ENCODE measurements at regions of chr7 and their contacts with region 1.

Region 1: DNA sequence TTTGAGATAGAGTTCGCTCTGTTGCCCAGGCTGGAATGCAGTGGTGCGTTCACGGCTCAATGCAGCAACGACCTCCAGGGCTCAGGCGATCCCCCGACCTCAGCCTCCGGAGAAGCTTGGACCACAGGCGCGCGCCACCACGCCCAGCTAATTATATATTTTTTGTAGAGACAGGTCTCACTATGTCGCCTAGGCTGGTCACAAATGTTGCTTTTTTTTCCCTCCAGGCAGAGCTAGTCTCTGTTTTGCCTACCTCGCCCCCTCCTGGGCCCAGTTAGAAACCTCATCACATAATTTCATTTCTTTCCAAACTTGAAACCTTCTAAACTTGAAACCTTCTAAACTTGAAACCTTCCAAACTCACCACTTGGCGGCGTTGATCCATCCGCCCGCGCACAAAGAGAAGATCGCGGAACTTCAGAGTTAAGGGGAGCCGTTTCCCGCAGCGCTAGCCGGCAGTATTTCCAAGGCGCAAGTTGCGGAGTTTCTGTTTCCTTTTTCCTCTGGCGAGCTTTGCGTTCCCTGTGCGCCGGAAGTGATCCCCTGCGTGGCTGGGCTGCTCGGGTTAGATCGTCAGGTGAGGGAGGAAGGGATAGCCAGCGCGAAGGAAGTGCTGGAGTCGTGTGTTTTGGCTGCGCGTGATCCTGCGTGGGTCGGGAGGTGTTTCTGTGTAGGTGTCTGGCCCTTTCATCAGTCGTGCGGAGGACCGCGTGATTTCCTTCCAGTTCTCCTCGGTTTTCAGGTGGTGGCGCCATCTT is at the start of gene SSBP1:
- DNase-seq: peak; percentile 97
- H3K4me3 Mint-ChIP-seq: peak within 1 kb of the TSS; percentile 97
- H3K27ac Mint-ChIP-seq: peak within 1 kb of the TSS; percentile 98
- H3K4me1 Mint-ChIP-seq: peaks cover 16% of the 10 kb centered on the region
- H3K27me3 Mint-ChIP-seq: no peaks in the 10 kb centered on the region
- CTCF ChIP-seq: peak; percentile 53
- total RNA-seq, gene SSBP1: 269 and 340 TPM in 2 replicates

Region 2: GRCh38 chr7:141551094-141551781 is 186.8 kb before region 1 on chr7 and contains the start of gene AGK:
- CTCF ChIA-PET with region 1: interaction called, 3 read pairs
- POLR2A ChIA-PET with region 1: interaction called, 6 read pairs
- intact Hi-C with region 1: loop called (anchors 5 kb)
- DNase-seq: peak; percentile 64
- H3K4me3 Mint-ChIP-seq: peak within 1 kb of the TSS; percentile 85
- H3K27ac Mint-ChIP-seq: peak within 1 kb of the TSS; percentile 72
- H3K4me1 Mint-ChIP-seq: peaks cover 19% of the 10 kb centered on the region
- H3K27me3 Mint-ChIP-seq: no peaks in the 10 kb centered on the region
- CTCF ChIP-seq: no peak
- total RNA-seq, gene AGK: 35.4 and 41.4 TPM in 2 replicates

Region 3: GRCh38 chr7:141701489-141702046 is 36.4 kb before region 1 on chr7:
- CTCF ChIA-PET with region 1: interaction called, 37 read pairs
- POLR2A ChIA-PET with region 1: interaction called, 23 read pairs
- intact Hi-C with region 1: loop called (anchors 5 kb)
- DNase-seq: peak; percentile 38
- H3K4me3 Mint-ChIP-seq: peak overlapping the region; percentile 72
- H3K27ac Mint-ChIP-seq: no peak overlapping the region
- H3K4me1 Mint-ChIP-seq: peaks cover 32% of the 10 kb centered on the region
- H3K27me3 Mint-ChIP-seq: no peaks in the 10 kb centered on the region
- CTCF ChIP-seq: no peak

Region 4: DNA sequence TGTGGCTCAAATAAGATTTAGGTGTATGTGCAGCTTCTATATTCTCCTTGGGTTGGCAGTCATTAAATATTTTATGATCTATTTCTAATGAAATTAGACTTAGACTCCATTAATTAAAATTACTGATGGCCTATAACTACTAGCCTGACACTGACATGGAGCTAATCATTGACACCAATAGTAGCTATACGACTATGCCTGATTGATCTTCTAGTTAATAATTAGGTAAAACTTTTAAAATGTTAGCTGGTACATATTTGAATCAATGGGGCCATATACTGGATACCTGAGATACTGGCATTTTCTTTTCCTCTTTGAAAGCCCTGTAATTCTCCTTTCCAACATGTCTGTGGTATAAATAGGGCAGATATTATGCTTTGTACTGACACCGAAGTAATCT is 15.5 kb before region 1 on chr7:
- CTCF ChIA-PET with region 1: interaction called, 11 read pairs
- POLR2A ChIA-PET with region 1: interaction called, 11 read pairs
- intact Hi-C with region 1: no loop called
- DNase-seq: no peak
- H3K4me3 Mint-ChIP-seq: no peak overlapping the region
- H3K27ac Mint-ChIP-seq: no peak overlapping the region
- H3K4me1 Mint-ChIP-seq: no peaks in the 10 kb centered on the region
- H3K27me3 Mint-ChIP-seq: no peaks in the 10 kb centered on the region
- CTCF ChIP-seq: no peak

Region 5: GRCh38 chr7:141785706-141786552 is 47.9 kb after region 1 on chr7:
- CTCF ChIA-PET with region 1: interaction called, 10 read pairs
- POLR2A ChIA-PET with region 1: interaction called, 4 read pairs
- intact Hi-C with region 1: no loop called
- DNase-seq: peak; percentile 62
- H3K4me3 Mint-ChIP-seq: no peak overlapping the region
- H3K27ac Mint-ChIP-seq: no peak overlapping the region
- H3K4me1 Mint-ChIP-seq: no peaks in the 10 kb centered on the region
- H3K27me3 Mint-ChIP-seq: no peaks in the 10 kb centered on the region
- CTCF ChIP-seq: peak; percentile 54

Region 6: DNA sequence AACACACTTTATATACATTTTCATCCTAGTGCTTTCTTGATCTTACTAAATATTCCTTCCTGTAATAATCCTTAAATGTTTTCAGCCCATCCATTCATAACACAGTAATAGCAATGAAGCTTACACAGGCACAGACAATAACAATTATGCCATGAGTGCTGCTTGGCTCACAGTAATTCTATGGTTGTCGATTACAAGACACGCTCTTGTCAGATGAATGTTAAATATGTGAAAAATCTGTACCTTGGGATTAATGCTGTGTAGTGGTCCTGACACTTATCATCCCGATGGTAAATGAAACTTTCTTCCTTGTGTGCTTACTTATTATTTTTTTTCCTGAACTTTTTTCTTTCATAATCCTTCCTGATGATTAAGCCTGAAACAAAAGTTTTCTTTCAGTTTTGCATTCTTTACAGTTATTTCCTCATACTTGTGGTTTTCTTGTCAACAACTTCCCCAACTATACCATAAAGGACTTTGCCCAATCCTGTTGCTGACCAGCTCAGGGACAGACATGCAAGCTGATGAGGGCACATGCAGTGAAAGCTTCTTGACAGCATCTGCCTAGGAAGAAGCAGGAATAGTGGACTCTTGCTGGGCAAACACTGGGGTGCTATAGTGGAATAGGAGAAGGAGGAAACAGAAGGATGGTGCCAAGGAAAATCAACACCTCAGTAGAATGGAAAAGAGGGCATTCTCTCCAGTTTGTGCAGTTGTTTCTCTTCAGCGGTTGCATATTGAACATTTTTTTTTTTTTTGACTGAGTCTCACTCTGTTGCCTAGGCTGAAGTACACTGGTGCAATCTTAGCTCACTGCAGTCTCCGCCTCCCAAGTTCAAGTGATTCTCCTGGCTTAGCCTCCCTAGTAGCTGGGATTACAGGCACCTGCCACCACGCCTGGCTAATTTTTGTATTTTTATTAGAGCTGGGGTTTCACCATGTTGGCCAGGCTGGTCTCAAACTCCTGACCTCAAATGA is 366.8 kb after region 1 on chr7:
- CTCF ChIA-PET with region 1: no interaction called
- POLR2A ChIA-PET with region 1: no interaction called
- intact Hi-C with region 1: no loop called
- DNase-seq: peak; percentile 71
- H3K4me3 Mint-ChIP-seq: no peak overlapping the region
- H3K27ac Mint-ChIP-seq: no peak overlapping the region
- H3K4me1 Mint-ChIP-seq: peaks cover 14% of the 10 kb centered on the region
- H3K27me3 Mint-ChIP-seq: no peaks in the 10 kb centered on the region
- CTCF ChIP-seq: no peak

Measured in MCF 10A (cell line).